Heart left ventricle (tissue), 16 donors: ENCODE measurements at regions of chr2 and their contacts with region 1.

Region 1: DNA sequence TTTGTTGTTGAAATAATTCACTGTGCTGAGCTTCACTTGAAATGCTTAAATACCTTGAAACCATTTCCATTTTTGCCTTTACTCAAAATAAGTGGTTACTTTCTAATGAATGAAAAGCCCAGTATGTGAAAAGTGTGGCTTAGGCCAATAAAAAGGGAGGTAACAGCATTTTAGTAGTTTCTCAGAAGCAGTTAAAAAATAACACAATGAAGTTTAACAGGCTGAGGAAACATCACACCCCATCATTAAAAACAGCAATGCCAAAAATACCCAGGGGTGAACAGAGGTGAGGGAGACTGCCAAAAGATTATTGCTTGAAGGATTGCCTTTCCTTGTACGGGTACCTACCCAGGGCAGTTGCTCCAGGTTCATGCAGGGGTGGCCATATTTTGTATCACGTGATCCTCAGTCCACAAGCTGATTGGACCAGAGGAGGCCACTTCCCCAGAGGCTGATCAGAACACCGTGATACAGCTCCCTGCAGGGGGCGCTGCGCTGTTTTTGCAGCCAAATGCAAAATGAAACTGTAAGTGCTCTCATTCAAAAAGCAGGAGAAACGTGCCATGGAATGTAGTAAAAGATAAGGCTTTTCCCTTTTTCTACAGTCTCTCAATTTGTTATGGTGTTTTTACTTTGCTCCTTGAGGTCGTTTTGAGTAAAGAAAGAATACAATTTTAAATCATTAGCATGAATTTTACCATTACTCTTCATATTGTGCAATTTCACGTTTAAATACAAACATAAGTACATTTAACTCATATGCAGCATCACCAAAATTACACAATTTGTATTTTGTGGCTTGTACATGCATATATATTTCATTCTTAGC is 70.2 kb upstream of the SH3BP4 start:
- DNase-seq: peak; percentile 78 to 91 (median 85)
- ATAC-seq: peak; percentile 92 to 98 (median 96)
- H3K4me3 ChIP-seq: peak overlapping the region in 7 of 12 donors; percentile 13 to 38 (median 26)
- H3K27ac ChIP-seq: peak overlapping the region in 3 of 12 donors; percentile 2 to 40 (median 23)
- H3K4me1 ChIP-seq: peaks cover 0 to 25% (median 8%) of the 10 kb centered on the region in 12 donors
- H3K27me3 ChIP-seq: no peaks in the 10 kb centered on the region
- CTCF ChIP-seq: peak; percentile 67 to 93 (median 78)
- POLR2A ChIP-seq: no peak

Region 2: GRCh38 chr2:234951664-234952269 is 70.1 kb after region 1 on chr2 and contains the start of gene SH3BP4:
- intact Hi-C with region 1: loop called in 2 of 10 experiments (anchors 5 to 10 kb)
- DNase-seq: peak; percentile 84 to 90 (median 89)
- ATAC-seq: peak; percentile 80 to 93 (median 90)
- H3K4me3 ChIP-seq: peak within 1 kb of the TSS; percentile 73 to 100 (median 85)
- H3K27ac ChIP-seq: peak within 1 kb of the TSS; percentile 70 to 91 (median 80)
- H3K4me1 ChIP-seq: peaks cover 0 to 43% (median 17%) of the 10 kb centered on the region in 12 donors
- H3K27me3 ChIP-seq: peaks cover 0 to 33% (median 0%) of the 10 kb centered on the region in 9 donors
- CTCF ChIP-seq: peak in 1 of 12 donors; percentile 2
- POLR2A ChIP-seq: peak in 1 of 2 donors; percentile 17
- total RNA-seq, gene SH3BP4: 8.5 to 33.5 (median 12.4) TPM

Region 3: DNA sequence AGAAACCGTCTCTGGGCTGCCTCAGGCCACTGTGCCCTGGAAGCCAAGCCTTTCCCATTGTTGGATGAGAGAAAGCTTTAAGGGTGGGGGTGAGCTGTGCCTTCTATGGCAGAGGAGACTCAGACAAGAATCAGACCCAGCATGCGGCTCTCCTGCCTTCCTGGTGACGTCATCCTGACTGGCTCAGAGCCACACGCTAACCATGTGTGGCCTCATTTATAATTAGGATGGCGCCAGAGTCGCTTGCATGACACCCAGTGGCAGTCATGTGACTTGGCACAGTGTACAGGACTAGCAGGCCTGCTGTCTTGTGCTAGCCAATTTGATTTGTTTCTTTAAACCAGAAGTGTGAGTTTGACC is 169.3 kb after region 1 on chr2:
- intact Hi-C with region 1: loop called in 4 of 10 experiments (anchors 2 to 5 kb)
- DNase-seq: peak; percentile 89 to 97 (median 93)
- ATAC-seq: peak; percentile 90 to 95 (median 90)
- H3K4me3 ChIP-seq: no peak overlapping the region
- H3K27ac ChIP-seq: peak overlapping the region; percentile 51 to 86 (median 78)
- H3K4me1 ChIP-seq: peaks cover 2 to 57% (median 27%) of the 10 kb centered on the region in 12 donors
- H3K27me3 ChIP-seq: no peaks in the 10 kb centered on the region
- CTCF ChIP-seq: peak in 6 of 12 donors; percentile 5 to 37 (median 18)
- POLR2A ChIP-seq: peak in 1 of 2 donors; percentile 30

Region 4: GRCh38 chr2:235098736-235099494 is 217.3 kb after region 1 on chr2:
- intact Hi-C with region 1: loop called in 3 of 10 experiments (anchors 10 kb)
- DNase-seq: no peak
- ATAC-seq: no peak
- H3K4me3 ChIP-seq: no peak overlapping the region
- H3K27ac ChIP-seq: no peak overlapping the region
- H3K4me1 ChIP-seq: peaks cover 0 to 7% (median 2%) of the 10 kb centered on the region in 12 donors
- H3K27me3 ChIP-seq: no peaks in the 10 kb centered on the region
- CTCF ChIP-seq: no peak
- POLR2A ChIP-seq: no peak